GM18951 (cell line): ENCODE measurements at regions of chr13 and their contacts with region 1.

Region 1: GRCh38 chr13:26186118-26186870 is 35.8 kb downstream of the RNF6 start:
- POLR2A ChIP-seq: peak; percentile 65

Region 2: DNA sequence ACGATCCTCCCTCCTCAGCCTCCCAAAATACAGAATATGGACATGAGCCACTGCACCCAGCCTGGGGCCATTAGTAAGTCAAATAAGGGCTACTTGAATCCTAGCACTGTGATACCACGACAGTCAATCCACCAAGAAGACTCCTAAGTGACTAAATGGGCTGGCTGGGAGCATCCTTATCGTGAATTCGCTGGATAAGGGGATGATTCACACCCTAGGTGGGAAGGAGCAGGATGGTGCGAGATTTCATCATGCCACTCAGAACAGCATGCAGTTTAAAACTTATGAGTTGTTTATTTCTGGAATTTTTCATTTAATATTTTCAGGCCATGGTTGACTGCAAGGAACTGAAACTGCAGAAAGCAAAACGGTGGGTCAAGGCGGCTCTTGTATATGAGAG is 784.3 kb before region 1 on chr13:
- in situ Hi-C with region 1: no loop called
- POLR2A ChIP-seq: no peak

Region 3: DNA sequence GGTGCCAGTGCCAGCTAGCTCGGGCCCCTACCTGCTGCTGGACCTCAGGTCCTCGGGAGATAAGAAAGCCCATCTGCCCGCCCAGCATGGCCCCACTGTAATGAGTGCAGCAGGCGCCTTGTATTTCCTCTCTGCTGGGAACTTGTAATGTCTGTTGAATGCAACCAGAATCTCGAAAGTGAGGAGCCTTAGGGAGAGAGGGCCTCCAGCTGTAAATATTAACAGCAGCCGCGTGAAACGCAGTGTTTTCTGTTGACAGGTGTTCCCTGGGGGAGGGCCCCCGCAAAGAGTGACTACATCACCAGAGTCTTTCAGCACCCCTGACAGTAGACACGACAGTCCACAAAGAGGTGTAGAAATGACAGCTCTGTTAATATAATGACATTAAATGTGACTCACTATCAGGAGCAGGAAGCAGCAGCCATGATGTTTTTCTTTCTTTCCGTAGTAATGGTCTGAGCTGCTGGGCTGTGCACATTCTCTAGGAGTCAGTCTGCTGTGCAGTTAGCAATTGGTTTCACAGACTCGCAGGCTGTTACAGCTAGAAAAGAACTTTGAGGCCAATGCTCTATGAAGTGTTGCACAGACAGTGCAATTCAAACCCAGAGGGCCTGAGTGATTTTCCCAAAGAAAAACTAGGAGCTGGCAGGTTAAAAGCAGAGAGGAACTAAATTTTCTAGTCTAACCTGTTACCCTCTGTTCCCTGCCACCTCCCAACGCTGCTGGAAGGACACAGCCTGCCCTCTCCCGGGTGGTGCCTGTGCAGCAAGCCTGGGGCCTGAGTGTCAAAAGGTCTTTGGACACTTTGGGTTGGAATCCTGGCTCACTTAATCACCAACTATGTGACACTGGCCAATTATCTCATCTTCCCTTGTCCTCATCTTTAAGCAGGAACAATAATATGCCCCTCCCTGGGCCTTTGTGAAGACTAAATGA is 312.6 kb after region 1 on chr13:
- in situ Hi-C with region 1: loop called (anchors 10 kb)
- POLR2A ChIP-seq: no peak

Region 4: GRCh38 chr13:26698392-26699196 is 512.3 kb after region 1 on chr13:
- in situ Hi-C with region 1: loop called (anchors 25 kb)
- POLR2A ChIP-seq: no peak